ENCODE measurements at regions of chr2 and their contacts with region 1.

Region 1: GRCh38 chr2:178700136-178700535 is 107.1 kb downstream of the TTN start:
- DNase-seq: no peak

Region 2: GRCh38 chr2:178718988-178719387 is 18.9 kb after region 1 on chr2:
- intact Hi-C with region 1: loop called in 1 of 2 experiments (anchors 1 kb)
- DNase-seq: no peak

Region 3: GRCh38 chr2:179393481-179393880 is 693.3 kb after region 1 on chr2:
- intact Hi-C with region 1: no loop called
- DNase-seq: no peak